Psoas muscle (tissue), 8 donors: ENCODE measurements at regions of chr19 and their contacts with region 1.

Region 1: DNA sequence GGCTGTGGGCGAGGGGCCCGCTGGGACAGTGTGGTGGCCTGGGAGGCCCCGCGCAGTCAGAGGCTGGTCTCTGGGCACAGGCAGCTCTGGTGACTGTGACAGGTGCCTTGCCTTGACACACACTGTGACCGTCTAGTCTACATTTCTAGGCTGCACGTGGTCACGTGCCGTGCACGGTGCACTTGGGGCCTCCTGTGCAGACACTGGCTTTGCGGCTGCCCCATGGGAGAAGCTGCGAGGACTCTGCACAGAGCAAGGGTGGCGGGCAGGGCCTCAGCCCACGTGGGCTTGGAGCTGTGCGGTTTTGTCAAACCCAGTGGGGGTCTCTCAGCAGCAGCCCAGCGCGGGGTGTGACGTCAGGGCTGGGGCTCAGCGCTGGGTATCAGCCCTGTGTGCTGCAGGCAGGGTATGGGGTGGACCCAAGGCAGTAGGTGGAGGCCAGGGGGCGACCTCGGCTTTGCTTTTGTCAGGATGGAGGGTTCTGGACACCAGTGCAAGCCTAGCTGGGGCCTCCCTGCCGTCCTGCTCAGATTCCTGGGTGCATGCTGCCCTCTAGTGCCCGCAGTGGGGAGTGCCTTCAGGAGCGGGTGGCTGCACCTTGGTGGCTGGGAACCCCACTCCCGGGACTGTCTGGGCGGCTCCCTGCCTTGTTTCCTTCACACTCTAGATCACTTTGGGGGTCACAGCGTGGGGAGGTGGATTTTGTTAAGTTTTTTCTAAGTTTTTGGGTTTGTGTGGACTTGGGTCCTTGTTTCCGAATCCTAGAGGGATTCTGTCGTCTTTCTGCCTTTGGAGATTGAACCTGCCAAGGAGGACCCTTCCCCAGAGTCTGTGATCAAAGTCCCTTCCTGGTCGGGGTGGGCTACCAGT is 62.6 kb downstream of the KDM4B start:
- DNase-seq: peak; percentile 86 to 91
- ATAC-seq: peak; percentile 80 to 87 (median 81)
- H3K4me3 ChIP-seq: no peak overlapping the region
- H3K27ac ChIP-seq: peak overlapping the region; percentile 41
- H3K4me1 ChIP-seq: peaks cover 37% of the 10 kb centered on the region
- H3K27me3 ChIP-seq: no peaks in the 10 kb centered on the region
- CTCF ChIP-seq: peak; percentile 93

Region 2: GRCh38 chr19:4815426-4816201 is 215.9 kb before region 1 on chr19:
- intact Hi-C with region 1: loop called (anchors 2 to 10 kb)
- DNase-seq: peak; percentile 87 to 92
- ATAC-seq: peak; percentile 82 to 88 (median 85)
- H3K4me3 ChIP-seq: peak overlapping the region; percentile 45
- H3K27ac ChIP-seq: peak overlapping the region; percentile 93
- H3K4me1 ChIP-seq: peaks cover 35% of the 10 kb centered on the region
- H3K27me3 ChIP-seq: no peaks in the 10 kb centered on the region
- CTCF ChIP-seq: no peak

Region 3: GRCh38 chr19:4877753-4878490 is 153.5 kb before region 1 on chr19:
- intact Hi-C with region 1: loop called (anchors 2 kb)
- DNase-seq: peak; percentile 84 to 94
- ATAC-seq: peak; percentile 92 to 94 (median 94)
- H3K4me3 ChIP-seq: peak overlapping the region; percentile 21
- H3K27ac ChIP-seq: peak overlapping the region; percentile 91
- H3K4me1 ChIP-seq: peaks cover 16% of the 10 kb centered on the region
- H3K27me3 ChIP-seq: no peaks in the 10 kb centered on the region
- CTCF ChIP-seq: no peak

Region 4: DNA sequence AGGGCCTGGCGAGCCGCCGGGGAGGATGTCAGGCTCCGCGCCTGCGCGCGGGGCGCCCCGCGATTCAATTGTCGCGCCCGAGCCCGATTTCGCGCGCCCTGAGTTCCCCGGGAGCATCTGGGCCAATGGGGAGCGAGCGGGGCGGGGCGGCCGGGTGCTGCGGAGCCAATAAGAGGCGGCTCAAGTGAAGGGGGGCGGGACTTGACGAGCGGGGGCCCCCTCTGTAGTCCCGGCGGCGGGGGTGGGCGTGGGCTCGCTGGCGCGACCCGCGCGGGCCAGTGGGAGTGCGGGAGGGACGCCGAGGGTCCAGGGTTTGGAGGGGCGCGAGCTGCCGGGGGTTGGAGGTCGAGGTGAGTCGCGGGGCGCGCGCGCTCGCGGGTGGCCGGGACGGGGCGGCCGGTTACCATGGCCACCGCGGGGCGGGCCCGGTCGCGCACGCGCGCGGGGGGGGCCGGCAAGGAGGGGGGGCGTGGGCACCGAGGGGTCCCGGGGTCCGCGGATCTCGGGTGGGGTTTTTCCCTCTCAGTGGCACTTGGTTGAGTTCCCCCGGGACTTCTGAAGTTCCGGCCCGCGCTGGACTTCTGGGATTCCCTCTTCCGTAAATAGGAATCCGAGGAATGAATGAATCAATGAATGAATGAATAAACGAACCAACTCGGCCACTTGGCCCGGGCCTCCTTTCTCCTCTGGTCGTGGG is 121.4 kb before region 1 on chr19:
- intact Hi-C with region 1: loop called (anchors 5 to 10 kb)
- DNase-seq: peak; percentile 93 to 96
- ATAC-seq: peak; percentile 87 to 95 (median 91)
- H3K4me3 ChIP-seq: peak overlapping the region; percentile 79
- H3K27ac ChIP-seq: no peak overlapping the region
- H3K4me1 ChIP-seq: peaks cover 19% of the 10 kb centered on the region
- H3K27me3 ChIP-seq: no peaks in the 10 kb centered on the region
- CTCF ChIP-seq: no peak

Region 5: GRCh38 chr19:4976401-4977298 is 54.8 kb before region 1 on chr19:
- intact Hi-C with region 1: loop called (anchors 5 to 10 kb)
- DNase-seq: peak; percentile 83 to 93
- ATAC-seq: peak; percentile 69 to 78 (median 77)
- H3K4me3 ChIP-seq: peak overlapping the region; percentile 19
- H3K27ac ChIP-seq: peak overlapping the region; percentile 83
- H3K4me1 ChIP-seq: peaks cover 81% of the 10 kb centered on the region
- H3K27me3 ChIP-seq: no peaks in the 10 kb centered on the region
- CTCF ChIP-seq: peak; percentile 19

Region 6: GRCh38 chr19:4996701-4997100 is 34.8 kb before region 1 on chr19:
- intact Hi-C with region 1: loop called in 1 of 2 experiments (anchors 5 kb)
- DNase-seq: no peak
- ATAC-seq: no peak
- H3K4me3 ChIP-seq: no peak overlapping the region
- H3K27ac ChIP-seq: no peak overlapping the region
- H3K4me1 ChIP-seq: no peaks in the 10 kb centered on the region
- H3K27me3 ChIP-seq: no peaks in the 10 kb centered on the region
- CTCF ChIP-seq: no peak

Region 7: GRCh38 chr19:5086725-5087439 is 55.4 kb after region 1 on chr19:
- intact Hi-C with region 1: no loop called
- DNase-seq: peak in 1 of 2 donors; percentile 70
- ATAC-seq: peak; percentile 67 to 88 (median 76)
- H3K4me3 ChIP-seq: no peak overlapping the region
- H3K27ac ChIP-seq: peak overlapping the region; percentile 16
- H3K4me1 ChIP-seq: peaks cover 19% of the 10 kb centered on the region
- H3K27me3 ChIP-seq: no peaks in the 10 kb centered on the region
- CTCF ChIP-seq: peak; percentile 45